Psoas muscle (tissue), 8 donors: ENCODE measurements at regions of chr6 and their contacts with region 1.

Region 1: GRCh38 chr6:15621203-15622044 is 41.4 kb downstream of the DTNBP1 start:
- DNase-seq: peak; percentile 26 to 65
- ATAC-seq: peak in 3 of 4 donors; percentile 56 to 67 (median 63)
- H3K4me3 ChIP-seq: no peak overlapping the region
- H3K27ac ChIP-seq: peak overlapping the region; percentile 62
- H3K4me1 ChIP-seq: peaks cover 38% of the 10 kb centered on the region
- H3K27me3 ChIP-seq: no peaks in the 10 kb centered on the region
- CTCF ChIP-seq: no peak

Region 2: GRCh38 chr6:14129575-14129974 is 1491.8 kb before region 1 on chr6:
- intact Hi-C with region 1: loop called in 1 of 2 experiments (anchors 5 kb)
- DNase-seq: no peak
- ATAC-seq: peak; percentile 62 to 81 (median 74)
- H3K4me3 ChIP-seq: no peak overlapping the region
- H3K27ac ChIP-seq: no peak overlapping the region
- H3K4me1 ChIP-seq: no peaks in the 10 kb centered on the region
- H3K27me3 ChIP-seq: no peaks in the 10 kb centered on the region
- CTCF ChIP-seq: peak; percentile 53

Region 3: DNA sequence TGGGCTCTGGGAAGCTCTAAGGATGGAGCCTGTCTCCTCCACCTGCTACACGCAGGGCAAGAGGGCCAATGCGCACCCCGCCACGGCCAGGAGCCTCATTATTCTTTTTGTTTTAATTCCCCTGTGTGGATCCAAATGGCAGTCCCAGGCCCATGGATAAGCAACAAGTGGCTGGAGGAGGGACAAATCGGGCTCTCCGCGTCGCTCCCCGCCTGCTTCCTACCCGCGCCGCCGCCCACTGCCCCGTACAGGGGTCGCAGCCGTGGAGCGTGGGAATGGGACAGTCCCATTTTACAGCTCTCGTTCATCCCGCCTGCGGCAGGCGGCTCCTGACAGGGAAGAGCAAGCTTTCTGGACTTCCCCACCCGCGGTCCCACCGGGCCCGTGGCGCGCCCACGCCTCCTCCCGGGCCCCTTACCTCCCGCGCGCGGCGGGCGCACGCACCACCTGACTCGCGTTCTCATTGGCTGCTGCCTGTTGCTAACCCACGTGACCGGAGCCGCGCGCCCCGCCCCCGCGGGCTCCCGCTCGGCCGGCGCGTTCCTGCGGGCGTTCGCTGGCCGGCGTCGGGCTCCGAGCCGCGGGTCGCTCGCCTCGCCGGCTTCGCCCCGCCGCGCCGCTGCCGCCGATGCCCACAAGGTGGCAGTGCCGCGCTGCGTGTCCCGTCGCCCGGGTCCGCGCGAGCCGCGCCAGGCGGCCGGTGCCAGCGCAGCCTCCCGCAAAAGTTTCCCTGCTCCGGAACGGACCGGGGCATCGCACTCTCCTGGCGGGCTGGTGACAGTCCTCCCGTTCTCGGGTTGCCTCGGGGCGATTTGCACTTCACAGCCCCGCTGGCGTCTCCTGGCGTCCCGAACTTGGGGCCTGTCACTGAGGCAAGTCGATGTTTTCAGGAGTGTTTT is 1410.5 kb before region 1 on chr6:
- intact Hi-C with region 1: loop called in 1 of 2 experiments (anchors 10 kb)
- DNase-seq: peak; percentile 95 to 96
- ATAC-seq: peak; percentile 95 to 97 (median 96)
- H3K4me3 ChIP-seq: peak overlapping the region; percentile 82
- H3K27ac ChIP-seq: peak overlapping the region; percentile 89
- H3K4me1 ChIP-seq: peaks cover 11% of the 10 kb centered on the region
- H3K27me3 ChIP-seq: no peaks in the 10 kb centered on the region
- CTCF ChIP-seq: peak; percentile 93

Region 4: GRCh38 chr6:15264902-15265761 is 356.3 kb before region 1 on chr6:
- intact Hi-C with region 1: loop called in 1 of 2 experiments (anchors 10 kb)
- DNase-seq: peak in 1 of 2 donors; percentile 64
- ATAC-seq: peak; percentile 65 to 75 (median 70)
- H3K4me3 ChIP-seq: peak overlapping the region; percentile 8
- H3K27ac ChIP-seq: peak overlapping the region; percentile 81
- H3K4me1 ChIP-seq: peaks cover 48% of the 10 kb centered on the region
- H3K27me3 ChIP-seq: no peaks in the 10 kb centered on the region
- CTCF ChIP-seq: no peak

Region 5: GRCh38 chr6:15504581-15505350 is 116.7 kb before region 1 on chr6:
- intact Hi-C with region 1: loop called in 1 of 2 experiments (anchors 5 kb)
- DNase-seq: peak; percentile 67 to 87
- ATAC-seq: peak; percentile 57 to 69 (median 64)
- H3K4me3 ChIP-seq: peak overlapping the region; percentile 50
- H3K27ac ChIP-seq: peak overlapping the region; percentile 78
- H3K4me1 ChIP-seq: peaks cover 53% of the 10 kb centered on the region
- H3K27me3 ChIP-seq: no peaks in the 10 kb centered on the region
- CTCF ChIP-seq: no peak

Region 6: DNA sequence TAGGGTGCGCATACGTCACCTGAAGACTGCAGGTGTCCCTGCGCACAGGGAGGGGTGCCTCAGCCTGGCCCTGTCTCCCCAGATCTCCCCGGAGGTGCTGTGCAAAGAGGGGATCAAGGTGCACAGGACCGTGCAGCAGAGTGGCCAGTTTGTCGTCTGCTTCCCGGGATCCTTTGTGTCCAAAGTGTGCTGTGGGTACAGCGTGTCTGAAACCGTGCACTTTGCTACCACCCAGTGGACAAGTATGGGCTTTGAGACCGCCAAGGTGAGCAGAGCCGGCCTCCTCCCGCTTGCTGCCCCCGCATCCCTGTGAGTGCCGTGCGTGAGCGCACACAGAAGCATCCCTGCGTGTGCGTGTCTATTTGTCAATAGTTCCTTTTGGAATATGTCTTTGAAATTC is 109.3 kb before region 1 on chr6:
- intact Hi-C with region 1: loop called (anchors 5 kb)
- DNase-seq: no peak
- ATAC-seq: peak; percentile 28 to 54 (median 42)
- H3K4me3 ChIP-seq: no peak overlapping the region
- H3K27ac ChIP-seq: peak overlapping the region; percentile 79
- H3K4me1 ChIP-seq: peaks cover 47% of the 10 kb centered on the region
- H3K27me3 ChIP-seq: no peaks in the 10 kb centered on the region
- CTCF ChIP-seq: peak; percentile 40